ENCODE measurements at regions of chr15 and their contacts with region 1.

Region 1: GRCh38 chr15:74937596-74938296 is at the start of gene COX5A:
- DNase-seq: peak; percentile 96
- H3K4me3 Mint-ChIP-seq: peak within 1 kb of the TSS; percentile 86
- H3K27ac Mint-ChIP-seq: peak within 1 kb of the TSS; percentile 87
- H3K4me1 Mint-ChIP-seq: peaks cover 29% of the 10 kb centered on the region
- H3K27me3 Mint-ChIP-seq: no peaks in the 10 kb centered on the region
- total RNA-seq, gene COX5A: 322 TPM

Region 2: DNA sequence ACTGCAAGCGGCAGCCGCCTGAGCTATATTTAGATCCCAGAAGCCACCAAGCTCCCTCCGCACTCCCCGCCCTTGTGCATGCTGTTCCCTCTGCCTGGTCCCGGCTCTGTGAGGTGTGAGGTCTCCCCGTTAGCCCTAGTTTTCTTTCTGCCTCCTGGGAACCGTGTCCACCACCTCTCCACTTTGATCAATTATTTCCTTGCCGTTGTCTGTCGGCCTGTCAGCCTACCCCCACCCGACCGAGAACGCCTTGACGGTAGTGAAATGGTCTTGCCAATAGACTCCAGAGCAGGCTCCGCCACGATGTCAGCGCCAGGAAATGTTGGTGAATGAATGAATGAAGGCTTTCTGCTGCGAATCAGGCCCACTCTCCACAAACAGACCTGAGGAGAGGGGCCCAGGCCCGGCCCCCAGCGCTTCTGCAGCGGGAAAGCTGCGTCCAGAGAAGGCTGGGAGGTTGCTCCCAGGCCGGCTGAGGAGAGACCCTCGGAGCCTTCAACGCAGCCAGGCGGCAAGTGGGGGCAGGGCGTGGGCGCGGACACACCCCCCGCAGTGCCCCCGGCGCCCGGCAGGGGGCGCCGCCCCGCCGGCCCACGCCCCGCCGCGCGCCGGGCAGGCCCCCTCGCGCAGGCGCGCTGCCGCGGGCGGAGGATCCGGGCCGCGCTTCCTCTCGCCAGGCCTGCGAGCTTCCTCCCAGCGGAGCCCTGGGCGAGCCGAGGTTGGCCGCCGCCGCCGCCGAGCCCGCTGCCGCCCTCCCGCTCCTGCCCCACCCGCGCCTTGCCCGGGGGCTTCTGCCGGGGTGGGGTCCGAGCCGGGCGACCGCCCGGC is 156.1 kb before region 1 on chr15 and contains the start of gene CSK:
- CTCF ChIA-PET with region 1: no interaction called
- POLR2A ChIA-PET with region 1: no interaction called
- intact Hi-C with region 1: loop called (anchors 5 kb)
- DNase-seq: peak; percentile 83
- H3K4me3 Mint-ChIP-seq: peak within 1 kb of the TSS; percentile 90
- H3K27ac Mint-ChIP-seq: peak within 1 kb of the TSS; percentile 99
- H3K4me1 Mint-ChIP-seq: peaks cover 50% of the 10 kb centered on the region
- H3K27me3 Mint-ChIP-seq: no peaks in the 10 kb centered on the region
- total RNA-seq, gene CSK: 260 to 262 TPM

Region 3: DNA sequence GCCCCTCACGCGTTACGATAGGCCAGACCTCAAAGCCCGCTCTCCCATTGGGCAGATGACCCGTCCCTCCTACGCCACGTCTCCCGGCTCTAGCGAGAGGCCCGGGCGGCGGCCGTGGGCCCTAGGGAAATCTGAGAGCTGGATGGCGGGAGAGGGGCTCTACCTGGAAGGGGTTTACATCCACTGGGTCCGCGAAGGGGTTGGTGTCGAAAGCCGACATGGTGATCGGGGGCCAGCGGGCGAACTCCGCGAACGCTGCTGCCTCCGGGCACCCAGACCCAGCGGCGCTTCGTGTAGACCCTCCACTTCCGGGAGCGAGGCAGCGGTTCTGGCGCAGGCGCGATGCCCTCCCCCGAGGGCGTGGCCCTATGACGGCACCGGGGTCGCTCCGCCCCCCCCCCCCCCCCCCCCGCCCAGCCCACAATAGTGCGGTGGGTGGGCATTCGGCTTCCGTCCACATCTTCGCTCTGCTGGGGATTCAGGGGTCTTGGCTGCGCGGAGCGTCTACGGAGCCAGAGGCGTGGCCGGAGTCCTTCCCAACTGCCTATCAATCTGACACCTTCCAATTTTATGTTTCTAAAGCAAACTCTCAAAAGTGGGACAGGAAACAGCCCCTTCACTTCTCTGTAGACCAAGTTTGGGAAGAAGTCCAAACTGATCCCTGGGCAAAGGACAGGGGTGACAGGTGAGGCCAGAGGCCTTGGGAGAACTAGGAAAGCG is 64.5 kb before region 1 on chr15 and contains the start of gene SCAMP2:
- CTCF ChIA-PET with region 1: no interaction called
- POLR2A ChIA-PET with region 1: no interaction called
- intact Hi-C with region 1: loop called (anchors 1 kb)
- DNase-seq: peak; percentile 93
- H3K4me3 Mint-ChIP-seq: peak within 1 kb of the TSS; percentile 96
- H3K27ac Mint-ChIP-seq: peak within 1 kb of the TSS; percentile 90
- H3K4me1 Mint-ChIP-seq: peaks cover 45% of the 10 kb centered on the region
- H3K27me3 Mint-ChIP-seq: no peaks in the 10 kb centered on the region
- total RNA-seq, gene SCAMP2: 77.6 to 79.5 TPM

Region 4: DNA sequence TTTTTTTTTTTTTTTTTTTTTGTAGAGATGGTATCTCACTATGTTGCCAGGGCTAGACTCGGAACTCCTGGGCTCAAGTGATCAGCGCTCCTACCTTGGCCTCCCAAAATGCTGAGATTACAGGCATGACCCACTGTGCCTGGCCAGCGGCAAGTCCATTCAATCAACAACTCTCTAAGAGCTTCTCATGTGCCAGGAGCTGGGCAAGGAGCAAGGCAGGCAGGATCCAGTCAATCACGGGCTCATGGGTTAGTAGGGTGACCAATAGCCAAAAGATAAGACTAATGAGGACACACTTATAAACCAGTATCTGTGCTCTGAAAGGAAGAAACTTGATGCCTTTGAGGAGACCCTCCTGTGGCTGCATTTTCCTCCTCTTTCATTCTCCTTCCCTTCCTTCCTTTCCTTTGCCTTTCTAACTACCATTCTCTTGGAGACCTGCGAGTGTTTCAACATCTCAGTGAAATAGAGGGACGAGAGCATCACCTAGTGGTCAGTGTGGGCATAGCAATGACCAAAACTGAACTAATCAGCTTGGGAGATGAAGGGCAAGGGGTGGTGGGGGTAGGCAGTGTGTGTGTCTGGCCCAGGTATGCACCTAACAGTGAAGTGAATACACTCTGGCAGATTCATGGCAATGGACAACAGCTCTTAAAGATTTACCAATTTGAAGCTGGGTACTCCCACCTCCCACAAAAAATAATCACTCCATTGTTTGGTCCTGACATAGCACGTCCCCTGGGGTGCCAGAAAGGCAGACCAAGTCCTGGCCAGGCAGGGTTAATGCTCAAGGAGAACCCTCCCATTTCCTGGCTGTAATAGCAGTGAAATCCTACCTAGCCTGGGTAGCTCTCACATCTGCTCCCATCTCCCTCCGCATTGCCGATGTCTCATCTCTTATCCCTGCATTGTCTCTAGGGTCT is 12.6 kb after region 1 on chr15:
- CTCF ChIA-PET with region 1: interaction called, 25 read pairs
- POLR2A ChIA-PET with region 1: no interaction called
- intact Hi-C with region 1: no loop called
- DNase-seq: peak; percentile 86
- H3K4me3 Mint-ChIP-seq: no peak overlapping the region
- H3K27ac Mint-ChIP-seq: no peak overlapping the region
- H3K4me1 Mint-ChIP-seq: peaks cover 9% of the 10 kb centered on the region
- H3K27me3 Mint-ChIP-seq: no peaks in the 10 kb centered on the region

Measured in activated CD4-positive, alpha-beta memory T cell treated with anti-CD3 and anti-CD28 coated beads for 36 hours (primary cell).